Activated naive CD4-positive, alpha-beta T cell treated with anti-CD3 and anti-CD28 coated beads for 36 hours (primary cell): ENCODE measurements at regions of chr13 and their contacts with region 1.

Region 1: DNA sequence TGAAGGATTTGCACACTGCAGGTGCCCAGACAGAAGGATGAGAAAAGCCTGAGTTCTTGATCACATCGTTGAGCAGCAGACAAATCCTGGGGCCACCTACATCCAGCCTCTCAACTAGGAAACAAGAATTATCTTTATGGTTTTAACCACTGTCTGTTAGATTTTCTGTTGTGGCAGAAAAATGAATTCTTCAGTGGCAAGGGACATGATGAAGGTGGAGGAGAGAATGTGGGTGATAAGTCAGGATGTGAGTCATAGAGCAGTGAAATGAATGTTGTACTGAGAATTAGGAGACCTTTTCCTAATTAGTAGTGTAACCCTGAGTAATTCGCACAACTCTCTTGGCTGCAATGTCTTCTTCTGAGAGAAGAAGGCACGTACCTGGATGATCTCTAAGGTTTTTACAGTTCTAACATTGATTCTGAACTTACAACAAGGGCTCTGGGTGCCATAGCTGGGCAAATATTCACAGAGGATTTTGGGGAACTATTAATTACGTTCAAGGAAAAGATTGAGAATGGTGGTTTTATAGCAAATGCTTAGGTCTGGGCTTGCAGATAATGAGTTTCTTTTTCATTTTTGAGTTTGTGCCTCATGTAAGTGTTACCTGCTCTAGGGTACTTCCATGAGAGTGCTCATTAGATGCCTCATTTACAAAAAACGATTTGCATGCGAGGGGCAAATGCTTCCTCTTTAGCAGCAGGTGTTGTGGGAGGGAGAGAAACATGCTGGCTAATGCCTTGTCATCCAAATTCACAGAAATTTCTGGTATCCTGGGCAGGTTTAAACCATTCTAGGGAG is 111.0 kb upstream of the KL start:
- DNase-seq: peak; percentile 54
- H3K4me3 Mint-ChIP-seq: peak overlapping the region; percentile 51
- H3K27ac Mint-ChIP-seq: peak overlapping the region; percentile 86
- H3K4me1 Mint-ChIP-seq: peaks cover 29% of the 10 kb centered on the region
- H3K27me3 Mint-ChIP-seq: no peaks in the 10 kb centered on the region

Region 2: DNA sequence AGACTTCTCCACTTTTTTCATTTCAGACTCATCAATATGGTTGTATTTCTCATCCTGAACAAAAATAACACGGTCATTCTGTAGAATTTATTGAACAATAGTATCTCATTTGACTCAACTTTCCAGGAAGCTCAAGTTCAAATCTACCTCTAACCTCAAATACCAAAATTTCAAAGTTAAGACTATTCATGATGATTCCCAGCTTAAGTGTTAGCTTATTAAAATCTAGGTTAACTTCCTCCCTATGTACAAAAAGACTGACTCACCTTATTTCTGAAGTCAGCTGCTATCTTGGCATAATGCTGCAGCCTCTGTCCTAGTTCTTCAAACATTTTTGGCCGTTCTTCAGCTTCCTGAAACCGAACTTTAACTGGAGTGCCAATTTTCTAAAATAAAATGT is 1766.7 kb before region 1 on chr13:
- CTCF ChIA-PET with region 1: no interaction called
- intact Hi-C with region 1: no loop called
- DNase-seq: no peak
- H3K4me3 Mint-ChIP-seq: no peak overlapping the region
- H3K27ac Mint-ChIP-seq: peak overlapping the region; percentile 39
- H3K4me1 Mint-ChIP-seq: peaks cover 36% of the 10 kb centered on the region
- H3K27me3 Mint-ChIP-seq: no peaks in the 10 kb centered on the region

Region 3: GRCh38 chr13:32650705-32651311 is 254.5 kb before region 1 on chr13:
- CTCF ChIA-PET with region 1: no interaction called
- intact Hi-C with region 1: loop called (anchors 2 kb)
- DNase-seq: peak; percentile 79
- H3K4me3 Mint-ChIP-seq: no peak overlapping the region
- H3K27ac Mint-ChIP-seq: peak overlapping the region; percentile 12
- H3K4me1 Mint-ChIP-seq: peaks cover 39% of the 10 kb centered on the region
- H3K27me3 Mint-ChIP-seq: no peaks in the 10 kb centered on the region

Region 4: GRCh38 chr13:32737111-32737571 is 168.1 kb before region 1 on chr13:
- CTCF ChIA-PET with region 1: no interaction called
- intact Hi-C with region 1: loop called (anchors 1 kb)
- DNase-seq: no peak
- H3K4me3 Mint-ChIP-seq: peak overlapping the region; percentile 71
- H3K27ac Mint-ChIP-seq: peak overlapping the region; percentile 81
- H3K4me1 Mint-ChIP-seq: peaks cover 42% of the 10 kb centered on the region
- H3K27me3 Mint-ChIP-seq: no peaks in the 10 kb centered on the region

Region 5: GRCh38 chr13:32838945-32839344 is 66.3 kb before region 1 on chr13:
- CTCF ChIA-PET with region 1: no interaction called
- intact Hi-C with region 1: loop called (anchors 1 kb)
- DNase-seq: peak; percentile 29
- H3K4me3 Mint-ChIP-seq: no peak overlapping the region
- H3K27ac Mint-ChIP-seq: no peak overlapping the region
- H3K4me1 Mint-ChIP-seq: peaks cover 17% of the 10 kb centered on the region
- H3K27me3 Mint-ChIP-seq: no peaks in the 10 kb centered on the region

Region 6: GRCh38 chr13:32917504-32917903 is 12.2 kb after region 1 on chr13:
- CTCF ChIA-PET with region 1: interaction called, 3 read pairs
- intact Hi-C with region 1: loop called (anchors 1 kb)
- DNase-seq: peak; percentile 16
- H3K4me3 Mint-ChIP-seq: no peak overlapping the region
- H3K27ac Mint-ChIP-seq: no peak overlapping the region
- H3K4me1 Mint-ChIP-seq: peaks cover 10% of the 10 kb centered on the region
- H3K27me3 Mint-ChIP-seq: peaks cover 3% of the 10 kb centered on the region

Region 7: GRCh38 chr13:32940601-32941000 is 35.3 kb after region 1 on chr13:
- CTCF ChIA-PET with region 1: no interaction called
- intact Hi-C with region 1: no loop called
- DNase-seq: no peak
- H3K4me3 Mint-ChIP-seq: no peak overlapping the region
- H3K27ac Mint-ChIP-seq: no peak overlapping the region
- H3K4me1 Mint-ChIP-seq: peaks cover 12% of the 10 kb centered on the region
- H3K27me3 Mint-ChIP-seq: no peaks in the 10 kb centered on the region

Region 8: DNA sequence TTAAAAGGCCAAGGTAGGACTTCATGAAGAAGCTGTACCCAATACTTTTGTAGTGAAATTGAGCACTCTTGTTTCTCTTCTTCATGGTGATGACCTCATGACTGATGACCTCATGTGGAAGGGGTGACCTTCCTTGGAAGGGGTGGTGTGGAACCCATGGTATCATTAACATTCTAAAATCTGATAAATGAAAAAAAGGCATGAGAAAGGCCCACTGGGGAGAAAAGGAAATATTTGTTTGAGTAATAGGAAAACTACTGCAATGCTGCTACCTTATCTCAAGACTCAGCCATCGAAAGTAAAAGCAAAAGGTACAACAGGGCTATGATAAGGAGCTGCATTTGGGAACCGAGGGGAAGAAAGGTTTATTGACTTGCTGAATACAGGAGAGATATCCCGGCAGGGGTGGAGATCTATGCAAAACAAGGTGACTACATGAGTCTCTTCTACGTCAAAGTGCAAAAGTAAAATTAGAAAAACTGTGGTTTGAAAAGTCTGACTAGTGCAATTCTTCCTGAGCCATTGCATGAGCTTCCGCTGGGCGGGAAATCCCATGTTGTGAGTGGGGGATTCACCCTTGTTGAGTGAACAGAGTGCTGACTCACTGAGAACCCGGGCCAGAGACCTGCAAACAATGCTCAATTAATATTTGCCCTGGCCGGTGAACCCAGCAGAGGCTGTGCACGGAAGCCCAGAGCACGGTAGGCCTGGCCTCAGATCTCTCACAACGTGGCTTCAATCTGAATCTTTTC is 773.8 kb after region 1 on chr13:
- CTCF ChIA-PET with region 1: no interaction called
- intact Hi-C with region 1: loop called (anchors 1 kb)
- DNase-seq: peak; percentile 90
- H3K4me3 Mint-ChIP-seq: peak overlapping the region; percentile 49
- H3K27ac Mint-ChIP-seq: peak overlapping the region; percentile 93
- H3K4me1 Mint-ChIP-seq: peaks cover 30% of the 10 kb centered on the region
- H3K27me3 Mint-ChIP-seq: peaks cover 3% of the 10 kb centered on the region